Sigmoid colon (tissue), 7 donors: ENCODE measurements at regions of chr6 and their contacts with region 1.

Region 1: GRCh38 chr6:52419809-52420670 is at the start of gene EFHC1:
- DNase-seq: peak; percentile 99
- H3K4me3 ChIP-seq: peak within 1 kb of the TSS; percentile 61 to 97 (median 88)
- H3K27ac ChIP-seq: peak within 1 kb of the TSS; percentile 76 to 88 (median 85)
- H3K4me1 ChIP-seq: peaks cover 0 to 24% (median 14%) of the 10 kb centered on the region in 4 donors
- H3K27me3 ChIP-seq: no peaks in the 10 kb centered on the region
- CTCF ChIP-seq: no peak
- EP300 ChIP-seq: peak in 1 of 4 donors; percentile 34
- POLR2A ChIP-seq: peak; percentile 48 to 60
- total RNA-seq, gene EFHC1: 15.9 to 38.5 (median 19.1) TPM

Region 2: GRCh38 chr6:52333840-52334200 is 86.2 kb before region 1 on chr6:
- intact Hi-C with region 1: no loop called
- DNase-seq: no peak
- H3K4me3 ChIP-seq: no peak overlapping the region
- H3K27ac ChIP-seq: no peak overlapping the region
- H3K4me1 ChIP-seq: no peaks in the 10 kb centered on the region
- H3K27me3 ChIP-seq: no peaks in the 10 kb centered on the region
- CTCF ChIP-seq: no peak
- EP300 ChIP-seq: no peak
- POLR2A ChIP-seq: no peak

Region 3: DNA sequence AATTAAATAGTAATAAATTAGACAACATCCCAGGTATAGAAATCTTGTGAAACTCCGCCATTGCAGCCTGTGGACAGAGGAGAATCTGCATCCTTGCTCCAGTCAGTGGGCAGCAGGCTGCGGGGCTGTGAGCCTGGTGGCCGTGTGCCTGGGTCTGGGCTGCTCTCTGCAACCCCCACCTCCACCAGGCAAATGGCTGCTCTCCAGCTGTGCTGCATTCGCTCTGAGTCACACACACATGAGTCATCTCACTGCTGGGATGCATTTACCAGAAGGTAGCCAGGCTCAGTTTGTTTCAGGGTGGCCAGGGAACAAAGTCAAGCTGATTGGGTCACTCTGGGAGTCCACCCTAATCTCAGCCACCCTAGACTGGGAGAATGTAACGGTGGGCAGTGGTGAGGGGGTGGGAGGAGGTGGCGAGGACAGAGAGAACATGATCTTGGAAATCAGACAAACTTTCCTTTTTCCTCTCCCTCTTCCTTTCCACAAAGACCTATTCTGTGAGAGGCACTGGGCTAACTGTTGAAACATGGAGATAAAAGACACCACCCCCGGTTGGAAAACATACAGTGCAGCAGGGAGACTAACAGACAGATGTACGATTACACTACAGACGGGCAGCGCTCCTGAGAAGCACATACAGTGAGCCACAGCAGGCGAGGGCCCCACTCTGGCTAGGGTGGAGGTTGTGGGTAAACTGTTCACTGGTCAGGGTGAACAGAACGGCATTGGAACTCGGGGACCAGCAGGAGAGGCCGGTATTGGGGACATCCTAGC is 97.7 kb after region 1 on chr6:
- intact Hi-C with region 1: loop called (anchors 5 kb)
- DNase-seq: peak; percentile 96
- H3K4me3 ChIP-seq: peak overlapping the region in 1 of 4 donors; percentile 15
- H3K27ac ChIP-seq: peak overlapping the region; percentile 85 to 93 (median 90)
- H3K4me1 ChIP-seq: peaks cover 0 to 81% (median 72%) of the 10 kb centered on the region in 4 donors
- H3K27me3 ChIP-seq: no peaks in the 10 kb centered on the region
- CTCF ChIP-seq: peak in 1 of 4 experiments; percentile 9
- EP300 ChIP-seq: peak in 1 of 4 donors; percentile 65
- POLR2A ChIP-seq: peak in 1 of 2 donors; percentile 32